Calu3 (cell line): ENCODE measurements at regions of chr1 and their contacts with region 1.

Region 1: GRCh38 chr1:206912445-206913095 is 9.2 kb downstream of the FCMR start:
- DNase-seq: peak; percentile 82
- H3K4me3 Mint-ChIP-seq: no peak overlapping the region
- H3K27ac Mint-ChIP-seq: no peak overlapping the region
- H3K4me1 Mint-ChIP-seq: peaks cover 25% of the 10 kb centered on the region
- H3K27me3 Mint-ChIP-seq: peaks cover 20% of the 10 kb centered on the region
- CTCF ChIP-seq: peak; percentile 84

Region 2: GRCh38 chr1:206725109-206725963 is 187.2 kb before region 1 on chr1:
- CTCF ChIA-PET with region 1: interaction called, 3 read pairs
- intact Hi-C with region 1: loop called (anchors 2 kb)
- DNase-seq: peak; percentile 66
- H3K4me3 Mint-ChIP-seq: no peak overlapping the region
- H3K27ac Mint-ChIP-seq: no peak overlapping the region
- H3K4me1 Mint-ChIP-seq: peaks cover 46% of the 10 kb centered on the region
- H3K27me3 Mint-ChIP-seq: no peaks in the 10 kb centered on the region
- CTCF ChIP-seq: peak; percentile 40

Region 3: DNA sequence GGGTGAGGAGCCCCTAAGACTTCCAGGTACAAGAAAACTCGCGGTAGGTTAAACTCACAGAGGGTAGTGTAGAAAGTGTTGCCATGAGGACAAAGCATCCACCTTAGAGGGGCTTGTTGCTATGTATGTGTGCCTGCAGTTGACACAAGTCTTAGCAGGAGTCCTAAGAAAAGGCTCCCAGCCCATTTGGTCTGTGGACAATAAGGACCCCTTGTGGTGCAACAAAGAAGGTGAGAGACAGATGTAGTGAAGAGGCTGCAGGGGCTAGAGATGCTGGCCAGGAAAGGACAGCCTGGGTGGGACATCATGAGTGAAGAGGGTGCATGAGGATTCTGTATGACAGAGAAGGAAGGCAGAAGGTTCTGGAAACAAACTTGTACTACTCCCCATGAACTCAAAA is 104.0 kb before region 1 on chr1:
- CTCF ChIA-PET with region 1: interaction called, 38 read pairs
- intact Hi-C with region 1: loop called (anchors 1 kb)
- DNase-seq: peak; percentile 21
- H3K4me3 Mint-ChIP-seq: no peak overlapping the region
- H3K27ac Mint-ChIP-seq: no peak overlapping the region
- H3K4me1 Mint-ChIP-seq: no peaks in the 10 kb centered on the region
- H3K27me3 Mint-ChIP-seq: peaks cover 97% of the 10 kb centered on the region
- CTCF ChIP-seq: no peak

Region 4: GRCh38 chr1:206925106-206925736 is 12.7 kb after region 1 on chr1:
- CTCF ChIA-PET with region 1: interaction called, 10 read pairs
- intact Hi-C with region 1: no loop called
- DNase-seq: no peak
- H3K4me3 Mint-ChIP-seq: no peak overlapping the region
- H3K27ac Mint-ChIP-seq: no peak overlapping the region
- H3K4me1 Mint-ChIP-seq: no peaks in the 10 kb centered on the region
- H3K27me3 Mint-ChIP-seq: no peaks in the 10 kb centered on the region
- CTCF ChIP-seq: no peak